Upper lobe of right lung (tissue), 1 donor: ENCODE measurements at regions of chr10 and their contacts with region 1.

Region 1: GRCh38 chr10:13776861-13777311 is 190.1 kb downstream of the PRPF18 start:
- DNase-seq: no peak
- ATAC-seq: peak; percentile 65
- H3K4me3 ChIP-seq: no peak overlapping the region
- H3K27ac ChIP-seq: no peak overlapping the region
- H3K4me1 ChIP-seq: peaks cover 3% of the 10 kb centered on the region
- H3K27me3 ChIP-seq: no peaks in the 10 kb centered on the region
- CTCF ChIP-seq: no peak

Region 2: DNA sequence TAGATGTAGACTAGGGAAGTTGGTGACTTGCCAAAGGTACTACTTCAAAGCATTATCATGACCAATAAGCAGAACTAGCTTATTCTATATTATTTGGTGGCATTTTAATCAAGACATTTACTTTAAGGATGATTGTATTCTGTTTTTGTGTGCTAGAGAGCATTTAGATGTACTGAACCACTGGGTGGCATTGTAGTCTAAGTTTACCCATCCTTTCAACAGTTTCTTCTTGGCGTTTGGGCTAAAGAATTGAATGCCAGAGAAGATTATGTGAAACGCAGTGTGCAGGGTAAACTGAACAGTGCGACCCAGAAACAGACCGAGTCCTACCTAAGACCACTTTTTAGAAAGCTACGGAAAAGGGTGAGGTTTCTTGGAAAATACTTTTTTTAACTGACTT is 163.4 kb before region 1 on chr10:
- intact Hi-C with region 1: loop called (anchors 5 kb)
- DNase-seq: no peak
- ATAC-seq: no peak
- H3K4me3 ChIP-seq: no peak overlapping the region
- H3K27ac ChIP-seq: no peak overlapping the region
- H3K4me1 ChIP-seq: no peaks in the 10 kb centered on the region
- H3K27me3 ChIP-seq: no peaks in the 10 kb centered on the region
- CTCF ChIP-seq: peak; percentile 29

Region 3: DNA sequence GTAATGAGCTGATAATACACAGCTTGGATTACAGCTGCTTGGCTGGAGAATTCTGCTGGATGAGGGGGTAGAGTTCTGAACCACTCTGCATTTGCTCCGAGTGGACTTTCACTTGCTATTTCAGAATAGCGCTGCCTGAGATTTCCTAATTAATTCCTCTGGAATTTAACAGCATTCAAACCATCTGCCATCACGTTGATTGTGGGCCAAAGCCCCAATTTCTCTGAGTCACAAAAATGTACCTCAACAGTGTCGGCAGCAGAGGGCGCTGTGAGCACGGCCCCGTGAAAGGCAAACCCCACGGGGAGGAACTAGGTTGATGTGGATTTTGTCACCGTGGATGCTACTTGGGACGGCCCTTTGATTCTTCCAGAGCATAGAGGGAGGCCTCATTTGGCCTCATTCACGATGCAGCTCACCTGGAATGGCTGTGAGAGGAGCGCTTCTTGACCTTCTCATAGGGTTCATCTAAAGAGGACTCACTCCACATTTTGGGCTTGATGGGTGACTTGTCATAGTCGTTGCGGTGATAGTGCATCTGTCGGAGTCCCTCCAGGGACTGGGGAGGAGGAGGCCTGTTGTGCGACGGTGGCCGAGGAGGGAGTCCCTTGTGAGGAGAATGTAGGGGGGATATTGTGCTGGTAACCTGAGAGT is 116.9 kb before region 1 on chr10:
- intact Hi-C with region 1: loop called (anchors 5 kb)
- DNase-seq: peak; percentile 83
- ATAC-seq: peak; percentile 84
- H3K4me3 ChIP-seq: no peak overlapping the region
- H3K27ac ChIP-seq: peak overlapping the region; percentile 73
- H3K4me1 ChIP-seq: peaks cover 19% of the 10 kb centered on the region
- H3K27me3 ChIP-seq: no peaks in the 10 kb centered on the region
- CTCF ChIP-seq: peak; percentile 87

Region 4: GRCh38 chr10:13816195-13816926 is 39.5 kb after region 1 on chr10:
- intact Hi-C with region 1: no loop called
- DNase-seq: peak; percentile 69
- ATAC-seq: peak; percentile 70
- H3K4me3 ChIP-seq: no peak overlapping the region
- H3K27ac ChIP-seq: peak overlapping the region; percentile 51
- H3K4me1 ChIP-seq: peaks cover 27% of the 10 kb centered on the region
- H3K27me3 ChIP-seq: no peaks in the 10 kb centered on the region
- CTCF ChIP-seq: no peak